ENCODE measurements at regions of chr2 and their contacts with region 1.

Region 1: GRCh38 chr2:27428213-27428977 is at the start of gene NRBP1:
- DNase-seq: peak; percentile 86 to 91 (median 89)
- H3K4me3 ChIP-seq: peak within 1 kb of the TSS; percentile 64 to 76
- H3K4me3 Mint-ChIP-seq: peak within 1 kb of the TSS; percentile 97 to 100 (median 98)
- H3K27ac ChIP-seq: peak within 1 kb of the TSS; percentile 93
- H3K27ac Mint-ChIP-seq: peak within 1 kb of the TSS; percentile 96 to 99 (median 98)
- H3K4me1 ChIP-seq: peaks cover 45% of the 10 kb centered on the region
- H3K4me1 Mint-ChIP-seq: peaks cover 24 to 44% (median 35%) of the 10 kb centered on the region in 4 donors
- H3K27me3 ChIP-seq: no peaks in the 10 kb centered on the region
- H3K27me3 Mint-ChIP-seq: no peaks in the 10 kb centered on the region
- total RNA-seq, gene NRBP1: 115 to 119 TPM

Region 2: GRCh38 chr2:27211829-27212627 is 216.4 kb before region 1 on chr2 and contains the starts of genes ATRAID and SLC5A6:
- CTCF ChIA-PET with region 1: no interaction called
- POLR2A ChIA-PET with region 1: no interaction called
- intact Hi-C with region 1: loop called (anchors 5 kb)
- DNase-seq: peak; percentile 89 to 93 (median 92)
- H3K4me3 ChIP-seq: peak within 1 kb of the TSS; percentile 71 to 94
- H3K4me3 Mint-ChIP-seq: peak within 1 kb of the TSS; percentile 95 to 100 (median 100)
- H3K27ac ChIP-seq: peak within 1 kb of the TSS; percentile 99
- H3K27ac Mint-ChIP-seq: peak within 1 kb of the TSS; percentile 97 to 100 (median 100)
- H3K4me1 ChIP-seq: peaks cover 22% of the 10 kb centered on the region
- H3K4me1 Mint-ChIP-seq: peaks cover 23 to 37% (median 31%) of the 10 kb centered on the region in 4 donors
- H3K27me3 ChIP-seq: no peaks in the 10 kb centered on the region
- H3K27me3 Mint-ChIP-seq: no peaks in the 10 kb centered on the region
- total RNA-seq, gene ATRAID: 103 to 109 TPM
- total RNA-seq, gene SLC5A6: 21.9 to 25.1 TPM

Region 3: DNA sequence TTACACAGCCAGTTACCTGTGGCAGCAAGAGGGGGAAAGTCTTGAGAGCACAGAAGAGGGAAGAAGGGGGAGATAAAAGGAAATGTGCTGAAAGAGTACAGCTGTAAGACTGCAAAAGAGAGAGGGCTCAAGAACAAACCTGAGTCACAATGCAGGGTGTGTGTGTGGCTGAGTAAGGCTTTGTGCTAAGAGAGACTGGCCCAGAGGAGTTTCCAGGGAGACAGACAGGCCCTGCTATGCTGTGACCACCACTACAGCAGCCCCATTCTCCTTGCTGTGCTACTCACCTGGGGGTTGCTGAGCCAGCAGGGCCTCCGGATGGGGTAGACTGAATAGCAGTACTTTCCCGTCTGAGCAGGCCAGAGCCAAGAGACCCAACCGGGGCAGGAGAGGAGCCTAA is 93.1 kb before region 1 on chr2:
- CTCF ChIA-PET with region 1: no interaction called
- POLR2A ChIA-PET with region 1: no interaction called
- intact Hi-C with region 1: no loop called
- DNase-seq: no peak
- H3K4me3 ChIP-seq: no peak overlapping the region
- H3K4me3 Mint-ChIP-seq: no peak overlapping the region
- H3K27ac ChIP-seq: no peak overlapping the region
- H3K27ac Mint-ChIP-seq: peak overlapping the region in 3 of 7 donors; percentile 33 to 56 (median 36)
- H3K4me1 ChIP-seq: no peaks in the 10 kb centered on the region
- H3K4me1 Mint-ChIP-seq: no peaks in the 10 kb centered on the region
- H3K27me3 ChIP-seq: no peaks in the 10 kb centered on the region
- H3K27me3 Mint-ChIP-seq: no peaks in the 10 kb centered on the region

Region 4: GRCh38 chr2:27380626-27381545 is 47.5 kb before region 1 on chr2 and contains the start of gene ZNF513:
- CTCF ChIA-PET with region 1: interaction called, 3 read pairs
- POLR2A ChIA-PET with region 1: interaction called, 44 read pairs
- intact Hi-C with region 1: loop called (anchors 2 kb)
- DNase-seq: peak; percentile 81 to 89 (median 83)
- H3K4me3 ChIP-seq: peak within 1 kb of the TSS; percentile 66 to 79
- H3K4me3 Mint-ChIP-seq: peak within 1 kb of the TSS; percentile 89 to 93 (median 90)
- H3K27ac ChIP-seq: peak within 1 kb of the TSS; percentile 78
- H3K27ac Mint-ChIP-seq: peak within 1 kb of the TSS; percentile 92 to 97 (median 95)
- H3K4me1 ChIP-seq: peaks cover 20% of the 10 kb centered on the region
- H3K4me1 Mint-ChIP-seq: peaks cover 15 to 36% (median 25%) of the 10 kb centered on the region in 4 donors
- H3K27me3 ChIP-seq: no peaks in the 10 kb centered on the region
- H3K27me3 Mint-ChIP-seq: no peaks in the 10 kb centered on the region
- total RNA-seq, gene ZNF513: 17.6 to 20.1 TPM

Region 5: GRCh38 chr2:27409321-27410073 is 18.9 kb before region 1 on chr2 and contains the start of gene PPM1G:
- CTCF ChIA-PET with region 1: interaction called, 11 read pairs
- POLR2A ChIA-PET with region 1: interaction called, 82 read pairs
- intact Hi-C with region 1: loop called (anchors 1 kb)
- DNase-seq: peak; percentile 94 to 95 (median 94)
- H3K4me3 ChIP-seq: peak within 1 kb of the TSS; percentile 61 to 92
- H3K4me3 Mint-ChIP-seq: peak within 1 kb of the TSS; percentile 87 to 94 (median 90)
- H3K27ac ChIP-seq: peak within 1 kb of the TSS; percentile 85
- H3K27ac Mint-ChIP-seq: peak within 1 kb of the TSS; percentile 91 to 99 (median 96)
- H3K4me1 ChIP-seq: peaks cover 36% of the 10 kb centered on the region
- H3K4me1 Mint-ChIP-seq: peaks cover 25 to 47% (median 34%) of the 10 kb centered on the region in 4 donors
- H3K27me3 ChIP-seq: no peaks in the 10 kb centered on the region
- H3K27me3 Mint-ChIP-seq: peaks cover 1 to 2% of the 10 kb centered on the region in 2 donors
- total RNA-seq, gene PPM1G: 53.8 to 56.1 TPM

Region 6: DNA sequence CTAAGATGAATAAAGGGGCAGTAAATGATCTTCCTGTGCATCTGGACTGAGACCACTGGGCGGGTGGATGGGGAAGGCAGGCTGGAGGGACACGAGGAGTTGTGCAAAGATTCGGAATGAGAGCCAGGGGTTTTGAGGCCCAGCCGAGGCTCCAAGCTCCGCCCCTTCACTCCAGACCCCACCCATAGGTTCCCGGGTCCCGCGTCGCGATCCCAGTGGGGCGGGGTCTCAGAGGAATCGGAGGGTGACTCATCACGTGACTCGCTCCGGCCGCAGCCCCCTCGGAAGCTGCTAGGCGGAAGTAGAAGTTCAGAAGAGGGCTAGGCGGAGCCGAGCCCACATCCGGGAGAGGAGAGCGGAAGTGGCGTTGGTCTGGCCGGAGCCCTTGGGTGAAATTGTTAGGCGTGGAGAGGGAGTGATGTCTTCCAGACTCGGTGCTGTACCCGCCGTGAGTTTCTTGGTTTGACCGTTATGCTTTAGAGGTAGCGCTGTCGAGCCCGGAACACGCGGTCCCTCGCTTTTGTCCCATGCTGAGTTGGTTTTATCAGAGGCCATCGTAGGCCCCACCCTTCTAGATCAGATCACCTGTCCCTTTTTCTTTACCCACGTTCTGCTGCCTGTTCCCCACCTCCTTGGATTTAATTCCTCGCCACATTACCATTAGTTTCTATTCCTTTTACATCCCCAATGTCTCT is 154.4 kb after region 1 on chr2 and contains the start of gene ZNF512:
- CTCF ChIA-PET with region 1: no interaction called
- POLR2A ChIA-PET with region 1: interaction called, 9 read pairs
- intact Hi-C with region 1: loop called (anchors 1 kb)
- DNase-seq: peak; percentile 73 to 81 (median 78)
- H3K4me3 ChIP-seq: peak within 1 kb of the TSS; percentile 59 to 96
- H3K4me3 Mint-ChIP-seq: peak within 1 kb of the TSS; percentile 90 to 100 (median 95)
- H3K27ac ChIP-seq: peak within 1 kb of the TSS; percentile 70
- H3K27ac Mint-ChIP-seq: peak within 1 kb of the TSS; percentile 86 to 99 (median 97)
- H3K4me1 ChIP-seq: peaks cover 50% of the 10 kb centered on the region
- H3K4me1 Mint-ChIP-seq: peaks cover 37 to 67% (median 46%) of the 10 kb centered on the region in 4 donors
- H3K27me3 ChIP-seq: no peaks in the 10 kb centered on the region
- H3K27me3 Mint-ChIP-seq: no peaks in the 10 kb centered on the region
- total RNA-seq, gene ZNF512: 51.9 to 66.2 TPM

Measured in CD4-positive, alpha-beta memory T cell (primary cell).